ENCODE measurements at regions of chr7 and their contacts with region 1.

Region 1: DNA sequence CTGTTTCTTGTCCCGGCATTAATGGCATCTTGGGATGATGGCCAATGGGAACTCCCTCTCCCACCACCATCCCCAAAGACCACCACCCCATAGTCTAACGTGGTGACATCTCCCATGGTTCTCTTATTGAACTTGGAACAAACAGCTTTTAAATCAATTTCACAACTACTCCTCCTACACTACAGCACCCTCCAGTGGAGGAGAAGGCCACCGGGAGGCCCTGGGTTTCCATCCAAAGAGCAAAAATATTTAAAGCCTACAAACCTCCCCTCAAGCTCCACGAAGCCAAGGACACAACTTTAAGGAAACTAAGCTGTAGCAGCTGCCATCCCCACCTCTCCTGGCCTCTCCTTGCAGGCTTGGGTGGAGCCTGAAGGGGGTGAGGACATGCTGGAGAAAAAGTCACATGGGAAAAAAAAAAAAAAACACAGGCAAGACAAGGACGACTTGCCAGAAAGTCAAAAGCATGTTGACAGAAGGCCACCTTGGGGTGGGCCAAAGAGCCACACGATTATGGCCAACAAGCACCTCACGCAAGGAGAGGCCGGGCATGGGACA is 94.0 kb upstream of the LANCL2 start:
- DNase-seq: no peak
- H3K4me3 ChIP-seq: no peak overlapping the region
- CTCF ChIP-seq: peak; percentile 55

Region 2: DNA sequence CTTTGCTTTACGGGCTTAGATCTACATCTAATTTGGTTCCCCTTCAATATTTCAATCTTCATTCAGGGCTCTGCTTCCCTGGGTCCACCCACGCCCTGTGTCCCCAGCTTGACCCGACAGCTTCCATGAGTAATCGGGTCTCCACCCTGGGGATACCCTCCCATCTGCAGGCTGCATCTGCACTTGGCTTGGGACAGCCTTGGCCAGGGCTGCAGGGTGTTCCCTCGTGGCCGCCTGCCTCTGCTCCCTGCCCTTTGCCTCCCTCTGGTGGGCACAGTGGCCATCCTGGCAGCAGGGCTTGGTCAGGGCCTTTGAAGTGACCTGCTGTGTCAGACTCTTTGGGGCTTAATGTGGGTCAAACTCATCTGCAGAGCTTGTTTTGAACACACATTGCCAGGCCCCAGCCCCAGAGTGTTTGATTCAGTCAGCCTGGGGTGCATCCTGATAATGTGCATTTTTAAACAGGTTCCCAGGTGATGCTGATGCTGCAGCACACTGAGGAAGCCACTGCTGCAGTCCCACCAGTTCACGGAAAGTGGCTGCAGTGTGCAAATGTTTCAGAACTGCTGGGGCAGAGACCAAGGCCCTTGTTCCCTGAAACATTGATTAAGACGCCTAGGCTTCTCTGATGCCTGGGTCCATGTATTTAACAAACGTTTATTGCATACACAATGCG is 431.5 kb before region 1 on chr7:
- in situ Hi-C with region 1: no loop called
- DNase-seq: no peak
- H3K4me3 ChIP-seq: no peak overlapping the region
- CTCF ChIP-seq: peak; percentile 54

Region 3: GRCh38 chr7:55237156-55237893 is 33.8 kb before region 1 on chr7:
- in situ Hi-C with region 1: no loop called
- DNase-seq: peak; percentile 72
- H3K4me3 ChIP-seq: no peak overlapping the region
- CTCF ChIP-seq: no peak

Region 4: DNA sequence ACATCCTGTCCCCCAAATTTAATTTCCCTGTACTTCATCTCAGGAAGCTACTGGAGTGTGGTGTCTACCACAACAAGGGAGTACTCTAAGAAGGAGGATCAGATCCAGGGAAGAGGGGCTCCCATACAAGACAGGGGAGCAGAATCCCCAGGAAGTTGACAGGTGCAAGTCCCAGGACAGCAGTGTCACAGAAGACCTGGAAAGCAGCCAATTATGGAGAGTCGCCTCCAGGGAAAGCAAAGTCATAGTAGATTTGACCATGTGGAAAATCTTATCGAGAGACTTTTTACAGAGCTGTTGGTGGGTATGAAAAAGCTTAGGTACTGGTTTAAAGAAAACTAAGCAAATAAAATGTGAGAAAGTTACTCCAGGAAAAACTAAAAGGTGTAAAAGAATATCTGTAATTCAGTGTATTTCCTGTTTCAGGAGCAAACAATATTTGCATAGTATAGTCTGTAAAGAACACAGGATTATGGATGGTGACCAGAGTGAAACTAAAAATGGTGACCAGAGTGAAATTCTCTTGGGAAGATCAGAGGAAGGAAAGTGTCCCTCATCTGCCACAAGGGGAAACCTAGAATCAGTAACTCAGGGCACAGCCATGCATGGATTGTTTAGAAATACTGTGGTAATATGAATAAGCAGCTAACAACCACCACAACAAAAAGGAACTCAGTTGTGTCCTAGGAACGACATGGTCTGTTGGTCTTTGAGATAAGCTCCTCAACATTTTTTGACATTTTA is 138.5 kb after region 1 on chr7:
- in situ Hi-C with region 1: loop called (anchors 5 kb)
- DNase-seq: no peak
- H3K4me3 ChIP-seq: no peak overlapping the region
- CTCF ChIP-seq: no peak